GM12878 (cell line): ENCODE measurements at regions of chr13 and their contacts with region 1.

Region 1: GRCh38 chr13:95723438-95723837 is 46.5 kb downstream of the DNAJC3 start:
- DNase-seq: no peak
- ATAC-seq: no peak
- H3K4me3 ChIP-seq: no peak overlapping the region
- H3K27ac ChIP-seq: no peak overlapping the region
- H3K4me1 ChIP-seq: no peaks in the 10 kb centered on the region
- H3K27me3 ChIP-seq: no peaks in the 10 kb centered on the region
- CTCF ChIP-seq: no peak
- EP300 ChIP-seq: no peak
- POLR2A ChIP-seq: no peak
- RAD21 ChIP-seq: no peak

Region 2: DNA sequence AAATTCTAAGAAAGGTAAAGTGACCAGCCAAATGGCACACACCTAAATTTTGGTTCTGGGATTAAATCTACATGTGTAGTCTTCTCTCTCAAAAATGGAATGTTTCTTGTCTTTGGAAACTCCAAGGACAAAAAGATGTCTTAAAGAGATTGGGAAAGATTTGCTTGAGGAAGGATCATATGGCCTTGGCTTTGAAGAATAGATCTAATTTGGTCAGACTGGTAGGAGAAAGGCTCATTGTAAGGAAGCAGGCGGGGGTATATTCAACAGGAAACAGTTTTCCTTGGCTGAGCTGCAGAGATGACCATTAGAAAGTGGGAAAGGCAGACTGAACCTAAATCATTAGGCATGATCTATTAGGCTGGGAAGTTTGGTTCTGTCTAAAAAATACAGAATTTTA is 1609.3 kb before region 1 on chr13:
- CTCF ChIA-PET with region 1: no interaction called
- POLR2A ChIA-PET with region 1: interaction called, 10 read pairs
- RAD21 ChIA-PET with region 1: no interaction called
- SMC1A ChIA-PET with region 1: no interaction called
- in situ Hi-C with region 1: no loop called
- intact Hi-C with region 1: no loop called
- DNase-seq: no peak
- ATAC-seq: no peak
- H3K4me3 ChIP-seq: no peak overlapping the region
- H3K27ac ChIP-seq: no peak overlapping the region
- H3K4me1 ChIP-seq: no peaks in the 10 kb centered on the region
- H3K27me3 ChIP-seq: no peaks in the 10 kb centered on the region
- CTCF ChIP-seq: no peak
- EP300 ChIP-seq: no peak
- POLR2A ChIP-seq: no peak
- RAD21 ChIP-seq: no peak

Region 3: DNA sequence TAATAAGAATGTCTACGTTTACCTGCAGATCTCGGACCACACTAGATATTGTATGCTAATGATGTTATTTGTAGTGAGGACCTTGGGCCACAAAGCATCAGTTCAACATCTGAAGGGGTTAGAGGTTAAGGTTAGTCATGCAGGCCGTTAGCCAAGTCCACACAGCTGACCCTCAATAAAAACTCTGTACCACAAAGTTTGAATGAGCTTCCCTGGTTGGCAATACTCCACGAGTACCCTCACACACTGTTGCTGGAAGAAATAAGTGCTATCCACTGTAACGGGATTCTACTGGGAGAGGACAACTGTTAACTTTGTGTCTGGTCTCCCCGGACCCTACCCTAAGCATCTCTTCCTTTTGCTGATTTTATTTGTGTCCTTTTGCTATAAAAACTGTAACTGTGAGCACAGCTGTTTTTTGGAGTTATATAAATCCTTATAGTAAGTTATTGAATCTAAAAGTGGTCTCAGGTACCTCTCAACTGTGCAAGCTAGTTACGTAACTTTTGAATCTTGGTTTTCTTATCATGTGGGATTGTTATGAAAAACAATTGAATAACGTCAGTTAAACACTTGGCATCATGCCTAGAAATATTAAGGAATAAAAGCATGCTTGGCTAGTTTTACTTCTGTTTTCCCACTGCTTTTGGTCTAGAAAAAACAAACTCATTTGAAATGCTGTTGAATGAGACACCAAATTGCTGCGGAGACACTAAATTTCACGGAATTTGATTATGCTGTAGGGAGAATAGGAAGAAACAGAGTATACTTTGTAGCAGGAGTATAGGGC is 135.0 kb after region 1 on chr13:
- CTCF ChIA-PET with region 1: no interaction called
- POLR2A ChIA-PET with region 1: no interaction called
- RAD21 ChIA-PET with region 1: no interaction called
- SMC1A ChIA-PET with region 1: no interaction called
- in situ Hi-C with region 1: no loop called
- intact Hi-C with region 1: no loop called
- DNase-seq: no peak
- ATAC-seq: no peak
- H3K4me3 ChIP-seq: no peak overlapping the region
- H3K27ac ChIP-seq: no peak overlapping the region
- H3K4me1 ChIP-seq: no peaks in the 10 kb centered on the region
- H3K27me3 ChIP-seq: no peaks in the 10 kb centered on the region
- CTCF ChIP-seq: no peak
- EP300 ChIP-seq: no peak
- POLR2A ChIP-seq: no peak
- RAD21 ChIP-seq: no peak